Natural killer cell (primary cell): ENCODE measurements at regions of chr1 and their contacts with region 1.

Region 1: DNA sequence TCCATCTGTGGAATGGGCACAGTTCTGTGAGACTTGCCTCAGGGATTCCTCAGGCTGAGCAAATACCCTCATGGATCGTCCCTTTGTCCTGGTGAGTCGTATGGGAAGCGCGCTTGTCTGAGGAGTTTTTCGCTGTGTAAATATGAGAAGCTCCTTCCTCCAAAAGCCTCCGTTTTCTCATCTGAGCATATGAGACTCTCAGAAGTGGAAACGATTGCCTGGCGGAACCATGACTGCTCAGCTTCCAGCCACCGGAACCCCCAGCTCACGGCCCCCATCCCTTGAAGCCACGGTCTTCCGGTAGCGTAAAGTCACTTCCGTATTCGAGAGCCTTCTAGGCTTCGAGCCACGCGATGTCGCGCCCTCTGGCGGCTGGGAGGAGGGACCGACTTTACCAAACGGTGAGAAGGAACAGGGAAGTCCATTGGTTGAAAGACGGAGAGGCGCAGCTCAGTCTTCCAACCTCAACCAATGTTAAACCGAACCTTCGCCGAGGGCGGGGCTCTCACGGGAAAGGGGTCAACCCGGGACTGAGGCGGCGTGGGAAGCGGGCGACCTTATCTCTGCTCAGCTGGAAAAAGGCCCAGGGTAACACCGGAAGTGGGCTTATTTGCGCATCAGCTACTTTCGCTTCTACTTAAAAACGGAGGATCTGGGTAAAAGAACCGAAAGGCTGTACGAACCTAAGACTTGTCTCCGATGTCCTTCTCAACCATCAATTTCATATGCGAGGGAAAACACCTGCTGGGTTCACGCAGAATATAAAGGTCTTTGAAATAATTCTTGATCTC is 46.2 kb downstream of the AZIN2 start:
- DNase-seq: peak; percentile 97 to 100
- ATAC-seq: peak; percentile 86 to 98 (median 89)
- H3K4me3 ChIP-seq: peak overlapping the region; percentile 71
- H3K4me3 Mint-ChIP-seq: peak overlapping the region; percentile 96
- H3K27ac ChIP-seq: peak overlapping the region; percentile 87
- H3K27ac Mint-ChIP-seq: peak overlapping the region; percentile 95 to 97
- H3K4me1 ChIP-seq: peaks cover 34% of the 10 kb centered on the region
- H3K4me1 Mint-ChIP-seq: peaks cover 32 to 55% of the 10 kb centered on the region in 2 donors
- H3K27me3 ChIP-seq: no peaks in the 10 kb centered on the region
- H3K27me3 Mint-ChIP-seq: peaks cover 0 to 1% of the 10 kb centered on the region in 2 donors
- CTCF ChIP-seq: peak; percentile 91

Region 2: DNA sequence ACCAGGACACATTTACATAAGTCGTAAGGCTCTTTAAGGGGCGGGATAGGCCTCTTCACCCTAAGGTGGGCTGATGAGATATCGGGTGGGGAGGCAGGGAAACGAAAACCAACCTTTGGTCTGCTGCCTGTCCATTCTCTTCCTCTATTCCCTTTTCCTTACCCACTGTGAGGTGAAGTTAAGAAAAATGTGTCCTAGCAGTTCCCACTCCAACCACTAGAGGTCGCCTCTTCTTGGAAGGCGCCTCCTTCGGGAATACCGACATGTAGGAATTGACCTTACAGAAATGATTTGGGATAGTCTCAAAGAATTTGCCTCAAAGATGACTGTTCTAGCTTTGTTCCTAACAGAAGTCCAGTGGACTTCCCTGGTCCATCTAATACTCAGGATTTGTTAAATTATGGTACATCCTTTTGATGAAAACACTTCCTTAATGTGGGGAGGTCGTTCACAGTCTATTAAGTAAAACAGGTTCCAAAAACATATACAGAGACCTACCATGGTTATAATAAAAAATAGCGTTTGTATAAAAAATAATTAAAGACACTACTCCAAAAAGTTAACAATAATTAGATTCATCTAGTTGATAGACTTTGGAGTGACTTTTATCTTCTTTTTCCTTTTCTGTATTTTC is 32.1 kb before region 1 on chr1:
- intact Hi-C with region 1: loop called (anchors 1 kb)
- DNase-seq: peak in 1 of 2 donors; percentile 59
- ATAC-seq: no peak
- H3K4me3 ChIP-seq: no peak overlapping the region
- H3K4me3 Mint-ChIP-seq: no peak overlapping the region
- H3K27ac ChIP-seq: no peak overlapping the region
- H3K27ac Mint-ChIP-seq: no peak overlapping the region
- H3K4me1 ChIP-seq: peaks cover 34% of the 10 kb centered on the region
- H3K4me1 Mint-ChIP-seq: peaks cover 44 to 55% of the 10 kb centered on the region in 2 donors
- H3K27me3 ChIP-seq: no peaks in the 10 kb centered on the region
- H3K27me3 Mint-ChIP-seq: no peaks in the 10 kb centered on the region
- CTCF ChIP-seq: peak; percentile 98

Region 3: DNA sequence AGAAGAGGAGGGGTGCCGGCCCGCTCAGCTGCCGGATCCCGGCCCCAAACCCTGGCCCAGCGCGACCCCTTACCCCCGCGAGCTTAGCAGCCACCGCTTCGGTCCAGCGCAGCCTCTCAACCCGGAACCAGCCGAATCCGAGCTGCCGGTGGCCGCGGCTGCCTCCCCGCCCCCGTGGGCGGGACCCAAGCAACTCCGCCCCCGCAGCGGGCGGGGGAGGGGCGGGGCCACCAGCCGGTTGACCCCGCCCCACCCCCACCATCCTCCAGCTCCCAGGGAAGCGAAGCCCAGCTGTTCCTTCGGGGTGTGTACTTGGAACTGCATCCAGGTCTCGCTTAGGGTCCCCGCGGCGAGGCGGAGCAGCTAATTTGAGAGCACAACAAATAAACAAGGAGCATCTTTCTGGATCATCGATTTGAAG is 54.7 kb after region 1 on chr1 and contains the start of gene TRIM62:
- intact Hi-C with region 1: loop called (anchors 2 kb)
- DNase-seq: peak; percentile 79 to 89
- ATAC-seq: peak; percentile 79 to 85 (median 79)
- H3K4me3 ChIP-seq: peak within 1 kb of the TSS; percentile 82
- H3K4me3 Mint-ChIP-seq: peak within 1 kb of the TSS; percentile 91
- H3K27ac ChIP-seq: no peak within 1 kb of the TSS
- H3K27ac Mint-ChIP-seq: peak within 1 kb of the TSS; percentile 45 to 79
- H3K4me1 ChIP-seq: peaks cover 23% of the 10 kb centered on the region
- H3K4me1 Mint-ChIP-seq: peaks cover 27 to 48% of the 10 kb centered on the region in 2 donors
- H3K27me3 ChIP-seq: peaks cover 2% of the 10 kb centered on the region
- H3K27me3 Mint-ChIP-seq: peaks cover 17 to 22% of the 10 kb centered on the region in 2 donors
- CTCF ChIP-seq: no peak
- total RNA-seq, gene TRIM62: 18.2 to 35.4 (median 23.2) TPM